Activated CD4-positive, alpha-beta memory T cell treated with anti-CD3 and anti-CD28 coated beads for 36 hours (primary cell): ENCODE measurements at regions of chr10 and their contacts with region 1.

Region 1: DNA sequence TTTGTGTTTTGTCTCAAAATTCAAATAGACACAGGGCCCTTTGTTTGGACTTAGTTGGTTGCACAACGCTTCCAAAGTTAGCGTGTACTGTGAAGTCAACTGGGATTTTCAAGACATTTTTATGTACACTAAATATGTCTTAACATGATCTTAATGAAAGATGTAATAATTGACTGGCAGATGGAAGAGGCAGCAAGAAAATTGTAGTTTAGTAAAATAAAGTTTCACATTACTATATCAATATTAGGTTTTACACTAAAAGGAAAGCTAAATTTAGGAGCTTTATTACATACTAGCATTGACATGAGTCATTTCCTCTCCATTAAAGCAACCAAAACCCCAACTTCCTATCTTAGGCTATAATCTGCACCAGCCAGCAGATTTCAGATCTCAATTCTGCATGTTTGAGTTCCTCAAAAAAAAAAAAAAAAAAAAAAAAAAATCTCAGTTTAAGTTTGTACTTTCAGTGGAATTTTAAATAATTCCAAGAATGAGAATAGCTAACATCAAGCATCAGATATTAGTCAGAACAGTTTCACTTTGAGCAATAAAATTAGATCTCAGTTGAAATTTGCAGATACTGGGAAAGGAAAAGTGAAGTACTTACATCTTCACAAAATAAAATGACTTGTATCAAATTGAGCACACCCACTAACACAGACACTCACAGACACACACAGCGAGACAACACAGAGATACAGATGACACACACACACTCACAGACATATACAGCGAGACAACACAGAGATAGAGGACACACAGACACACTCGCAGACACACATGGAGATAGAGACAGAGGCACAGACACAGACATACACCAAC is 346.6 kb upstream of the KLF6 start:
- DNase-seq: peak; percentile 42
- H3K4me3 Mint-ChIP-seq: no peak overlapping the region
- H3K27ac Mint-ChIP-seq: no peak overlapping the region
- H3K4me1 Mint-ChIP-seq: peaks cover 39% of the 10 kb centered on the region
- H3K27me3 Mint-ChIP-seq: no peaks in the 10 kb centered on the region

Region 2: DNA sequence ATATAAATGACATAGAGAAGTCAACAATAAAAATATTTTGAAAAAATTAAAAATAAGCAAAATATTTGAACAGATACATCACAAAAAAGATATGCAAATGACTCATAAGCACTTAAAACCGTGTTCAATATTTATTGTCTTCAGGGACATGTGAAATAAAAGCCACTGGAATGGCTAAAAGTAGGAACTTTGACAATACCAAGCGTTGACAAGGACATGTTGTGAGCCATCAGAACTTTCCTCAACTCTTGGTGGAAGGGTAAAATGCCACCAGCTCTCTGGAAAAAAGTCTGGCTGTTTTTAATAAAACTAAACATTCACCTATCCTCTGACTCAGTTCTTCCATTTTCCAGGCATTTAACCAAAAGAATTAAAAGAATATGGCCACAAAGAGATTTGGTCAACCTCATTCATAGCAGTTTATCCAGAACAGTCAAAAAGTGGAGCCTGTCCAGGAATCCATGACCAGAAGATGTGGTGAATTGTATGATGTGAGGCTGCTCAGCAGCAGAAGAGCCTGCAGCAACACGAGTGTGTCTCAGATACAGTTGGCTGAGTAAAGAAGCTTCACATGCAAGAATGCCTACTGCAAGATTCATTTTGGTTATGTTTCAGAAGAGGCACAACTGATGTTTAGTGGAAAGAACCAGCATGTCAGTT is 339.5 kb before region 1 on chr10:
- CTCF ChIA-PET with region 1: no interaction called
- POLR2A ChIA-PET with region 1: no interaction called
- intact Hi-C with region 1: no loop called
- DNase-seq: no peak
- H3K4me3 Mint-ChIP-seq: no peak overlapping the region
- H3K27ac Mint-ChIP-seq: peak overlapping the region; percentile 29
- H3K4me1 Mint-ChIP-seq: peaks cover 33% of the 10 kb centered on the region
- H3K27me3 Mint-ChIP-seq: no peaks in the 10 kb centered on the region

Region 3: GRCh38 chr10:3805791-3806461 is 325.7 kb before region 1 on chr10:
- CTCF ChIA-PET with region 1: interaction called, 3 read pairs
- POLR2A ChIA-PET with region 1: interaction called, 4 read pairs
- intact Hi-C with region 1: loop called (anchors 2 kb)
- DNase-seq: peak; percentile 72
- H3K4me3 Mint-ChIP-seq: peak overlapping the region; percentile 68
- H3K27ac Mint-ChIP-seq: no peak overlapping the region
- H3K4me1 Mint-ChIP-seq: peaks cover 62% of the 10 kb centered on the region
- H3K27me3 Mint-ChIP-seq: no peaks in the 10 kb centered on the region

Region 4: GRCh38 chr10:3935141-3935540 is 196.5 kb before region 1 on chr10:
- CTCF ChIA-PET with region 1: no interaction called
- POLR2A ChIA-PET with region 1: no interaction called
- intact Hi-C with region 1: loop called (anchors 2 kb)
- DNase-seq: peak; percentile 95
- H3K4me3 Mint-ChIP-seq: peak overlapping the region; percentile 42
- H3K27ac Mint-ChIP-seq: peak overlapping the region; percentile 92
- H3K4me1 Mint-ChIP-seq: peaks cover 49% of the 10 kb centered on the region
- H3K27me3 Mint-ChIP-seq: no peaks in the 10 kb centered on the region

Region 5: GRCh38 chr10:4067531-4067930 is 64.1 kb before region 1 on chr10:
- CTCF ChIA-PET with region 1: no interaction called
- POLR2A ChIA-PET with region 1: interaction called, 7 read pairs
- intact Hi-C with region 1: loop called (anchors 2 kb)
- DNase-seq: peak; percentile 57
- H3K4me3 Mint-ChIP-seq: no peak overlapping the region
- H3K27ac Mint-ChIP-seq: no peak overlapping the region
- H3K4me1 Mint-ChIP-seq: peaks cover 3% of the 10 kb centered on the region
- H3K27me3 Mint-ChIP-seq: no peaks in the 10 kb centered on the region

Region 6: GRCh38 chr10:4093438-4093837 is 38.2 kb before region 1 on chr10:
- CTCF ChIA-PET with region 1: no interaction called
- POLR2A ChIA-PET with region 1: no interaction called
- intact Hi-C with region 1: no loop called
- DNase-seq: no peak
- H3K4me3 Mint-ChIP-seq: no peak overlapping the region
- H3K27ac Mint-ChIP-seq: no peak overlapping the region
- H3K4me1 Mint-ChIP-seq: peaks cover 1% of the 10 kb centered on the region
- H3K27me3 Mint-ChIP-seq: no peaks in the 10 kb centered on the region

Region 7: GRCh38 chr10:4162571-4163286 is 31.1 kb after region 1 on chr10:
- CTCF ChIA-PET with region 1: no interaction called
- POLR2A ChIA-PET with region 1: no interaction called
- intact Hi-C with region 1: no loop called
- DNase-seq: no peak
- H3K4me3 Mint-ChIP-seq: no peak overlapping the region
- H3K27ac Mint-ChIP-seq: no peak overlapping the region
- H3K4me1 Mint-ChIP-seq: no peaks in the 10 kb centered on the region
- H3K27me3 Mint-ChIP-seq: no peaks in the 10 kb centered on the region

Region 8: GRCh38 chr10:4241724-4242345 is 110.2 kb after region 1 on chr10:
- CTCF ChIA-PET with region 1: no interaction called
- POLR2A ChIA-PET with region 1: no interaction called
- intact Hi-C with region 1: loop called (anchors 2 kb)
- DNase-seq: no peak
- H3K4me3 Mint-ChIP-seq: no peak overlapping the region
- H3K27ac Mint-ChIP-seq: no peak overlapping the region
- H3K4me1 Mint-ChIP-seq: peaks cover 32% of the 10 kb centered on the region
- H3K27me3 Mint-ChIP-seq: no peaks in the 10 kb centered on the region

Region 9: GRCh38 chr10:4767033-4767814 is 635.6 kb after region 1 on chr10:
- CTCF ChIA-PET with region 1: no interaction called
- POLR2A ChIA-PET with region 1: no interaction called
- intact Hi-C with region 1: loop called (anchors 10 kb)
- DNase-seq: no peak
- H3K4me3 Mint-ChIP-seq: no peak overlapping the region
- H3K27ac Mint-ChIP-seq: no peak overlapping the region
- H3K4me1 Mint-ChIP-seq: peaks cover 5% of the 10 kb centered on the region
- H3K27me3 Mint-ChIP-seq: peaks cover 20% of the 10 kb centered on the region

Region 10: GRCh38 chr10:4902571-4903011 is 771.0 kb after region 1 on chr10:
- CTCF ChIA-PET with region 1: no interaction called
- POLR2A ChIA-PET with region 1: no interaction called
- intact Hi-C with region 1: no loop called
- DNase-seq: peak; percentile 60
- H3K4me3 Mint-ChIP-seq: peak overlapping the region; percentile 27
- H3K27ac Mint-ChIP-seq: peak overlapping the region; percentile 70
- H3K4me1 Mint-ChIP-seq: peaks cover 19% of the 10 kb centered on the region
- H3K27me3 Mint-ChIP-seq: peaks cover 2% of the 10 kb centered on the region